ENCODE measurements at regions of chr3 and their contacts with region 1.

Region 1: GRCh38 chr3:40309418-40309924 is at the start of gene EIF1B:
- DNase-seq: peak; percentile 97 to 99 (median 98)
- ATAC-seq: peak; percentile 85
- H3K4me3 ChIP-seq: peak within 1 kb of the TSS; percentile 95 to 96
- H3K4me3 Mint-ChIP-seq: peak within 1 kb of the TSS; percentile 98
- H3K27ac ChIP-seq: peak within 1 kb of the TSS; percentile 93 to 96
- H3K27ac Mint-ChIP-seq: peak within 1 kb of the TSS; percentile 99
- H3K4me1 ChIP-seq: peaks cover 18% of the 10 kb centered on the region
- H3K4me1 Mint-ChIP-seq: peaks cover 33% of the 10 kb centered on the region
- H3K27me3 ChIP-seq: no peaks in the 10 kb centered on the region
- H3K27me3 Mint-ChIP-seq: no peaks in the 10 kb centered on the region
- CTCF ChIP-seq: peak; percentile 67
- total RNA-seq, gene EIF1B: 133 to 135 TPM

Region 2: GRCh38 chr3:39051647-39052561 is 1257.6 kb before region 1 on chr3 and contains the starts of genes SCN11A and WDR48:
- CTCF ChIA-PET with region 1: interaction called, 4 read pairs
- POLR2A ChIA-PET with region 1: no interaction called
- intact Hi-C with region 1: loop called (anchors 5 kb)
- DNase-seq: peak; percentile 82 to 97 (median 94)
- ATAC-seq: peak; percentile 88
- H3K4me3 ChIP-seq: peak within 1 kb of the TSS; percentile 59 to 70
- H3K4me3 Mint-ChIP-seq: peak within 1 kb of the TSS; percentile 98
- H3K27ac ChIP-seq: peak within 1 kb of the TSS; percentile 83 to 91
- H3K27ac Mint-ChIP-seq: peak within 1 kb of the TSS; percentile 98
- H3K4me1 ChIP-seq: peaks cover 16% of the 10 kb centered on the region
- H3K4me1 Mint-ChIP-seq: peaks cover 67% of the 10 kb centered on the region
- H3K27me3 ChIP-seq: no peaks in the 10 kb centered on the region
- H3K27me3 Mint-ChIP-seq: no peaks in the 10 kb centered on the region
- CTCF ChIP-seq: no peak
- total RNA-seq, gene SCN11A: 0.08 to 0.11 TPM
- total RNA-seq, gene WDR48: 102 to 103 TPM

Region 3: DNA sequence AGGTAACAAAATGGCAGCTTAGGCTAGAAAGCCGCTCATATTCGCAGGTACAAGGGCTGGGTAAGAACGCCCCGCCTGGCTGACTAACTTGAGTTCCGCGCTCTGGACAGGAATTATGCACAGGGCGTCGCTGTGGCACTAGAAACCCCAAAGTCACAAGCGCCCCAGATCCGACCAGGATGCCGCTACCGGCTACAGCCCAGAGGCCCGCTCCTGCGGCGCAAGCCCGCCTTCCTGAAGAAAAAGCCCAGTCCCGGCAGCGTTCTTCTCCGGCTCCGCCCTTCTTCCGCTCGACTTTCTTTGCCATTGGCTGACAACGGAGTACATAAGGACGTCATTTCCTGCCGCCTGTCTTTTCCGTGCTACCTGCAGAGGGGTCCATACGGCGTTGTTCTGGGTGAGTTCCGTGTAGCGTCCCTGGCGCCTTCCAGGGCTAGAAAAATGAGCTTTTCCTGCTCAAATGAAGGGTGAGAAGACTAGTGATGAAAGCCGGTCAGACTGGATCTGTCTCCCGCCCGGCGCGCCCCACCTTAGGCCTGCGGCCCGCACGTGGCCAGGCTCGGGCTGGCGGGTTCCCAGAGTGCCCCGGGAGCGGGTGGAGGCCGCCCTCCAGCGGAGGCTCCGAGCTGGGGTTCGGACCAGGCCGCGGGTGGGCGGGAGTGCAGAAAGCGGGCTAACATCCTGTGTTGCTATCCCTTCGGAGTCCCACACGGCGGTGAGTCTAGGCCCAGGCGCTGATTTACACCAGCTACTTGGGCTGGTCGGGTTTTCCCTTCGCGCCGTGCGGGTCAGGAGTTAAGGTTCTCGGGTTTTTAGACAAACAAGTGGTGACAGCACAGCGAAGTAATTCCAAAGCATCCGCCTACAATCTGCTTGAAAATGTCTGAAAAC is 902.9 kb before region 1 on chr3 and contains the start of gene RPSA:
- CTCF ChIA-PET with region 1: no interaction called
- POLR2A ChIA-PET with region 1: no interaction called
- intact Hi-C with region 1: loop called (anchors 1 to 2 kb)
- DNase-seq: peak; percentile 88 to 99 (median 94)
- ATAC-seq: peak; percentile 90
- H3K4me3 ChIP-seq: peak within 1 kb of the TSS; percentile 67 to 75
- H3K4me3 Mint-ChIP-seq: peak within 1 kb of the TSS; percentile 89
- H3K27ac ChIP-seq: peak within 1 kb of the TSS; percentile 83 to 90
- H3K27ac Mint-ChIP-seq: peak within 1 kb of the TSS; percentile 96
- H3K4me1 ChIP-seq: peaks cover 40% of the 10 kb centered on the region
- H3K4me1 Mint-ChIP-seq: peaks cover 48% of the 10 kb centered on the region
- H3K27me3 ChIP-seq: no peaks in the 10 kb centered on the region
- H3K27me3 Mint-ChIP-seq: no peaks in the 10 kb centered on the region
- CTCF ChIP-seq: peak; percentile 45
- total RNA-seq, gene RPSA: 1,951 to 2,020 TPM

Region 4: DNA sequence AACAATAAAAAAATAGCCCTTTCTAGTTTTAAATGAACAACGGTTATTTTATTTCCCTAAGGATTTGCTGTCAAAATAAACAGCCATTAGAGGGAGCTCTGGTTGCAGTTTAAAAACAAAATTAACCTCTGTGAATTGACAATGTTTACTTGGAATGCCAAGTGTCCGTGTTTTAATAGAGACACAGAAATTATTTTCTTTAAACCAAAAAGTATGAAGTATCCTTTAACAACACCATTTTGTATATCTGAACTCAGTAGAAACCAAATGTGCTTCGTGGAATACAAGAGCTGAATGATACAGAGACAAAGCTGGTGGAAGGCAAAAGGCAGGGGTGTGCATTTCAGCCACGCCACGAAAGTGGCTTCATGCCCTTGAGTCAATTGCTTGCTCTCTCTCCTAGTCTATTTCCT is 767.5 kb before region 1 on chr3:
- CTCF ChIA-PET with region 1: no interaction called
- POLR2A ChIA-PET with region 1: no interaction called
- intact Hi-C with region 1: no loop called
- DNase-seq: no peak
- ATAC-seq: no peak
- H3K4me3 ChIP-seq: no peak overlapping the region
- H3K4me3 Mint-ChIP-seq: no peak overlapping the region
- H3K27ac ChIP-seq: no peak overlapping the region
- H3K27ac Mint-ChIP-seq: no peak overlapping the region
- H3K4me1 ChIP-seq: no peaks in the 10 kb centered on the region
- H3K4me1 Mint-ChIP-seq: no peaks in the 10 kb centered on the region
- H3K27me3 ChIP-seq: no peaks in the 10 kb centered on the region
- H3K27me3 Mint-ChIP-seq: peaks cover 7% of the 10 kb centered on the region
- CTCF ChIP-seq: no peak

Region 5: GRCh38 chr3:40524568-40525285 is 215.3 kb after region 1 on chr3 and contains the start of gene ZNF621:
- CTCF ChIA-PET with region 1: no interaction called
- POLR2A ChIA-PET with region 1: interaction called, 4 read pairs
- intact Hi-C with region 1: loop called (anchors 1 kb)
- DNase-seq: peak; percentile 69 to 90 (median 84)
- ATAC-seq: peak; percentile 97
- H3K4me3 ChIP-seq: peak within 1 kb of the TSS; percentile 76 to 97
- H3K4me3 Mint-ChIP-seq: peak within 1 kb of the TSS; percentile 94
- H3K27ac ChIP-seq: peak within 1 kb of the TSS; percentile 80 to 94
- H3K27ac Mint-ChIP-seq: peak within 1 kb of the TSS; percentile 97
- H3K4me1 ChIP-seq: peaks cover 12% of the 10 kb centered on the region
- H3K4me1 Mint-ChIP-seq: peaks cover 38% of the 10 kb centered on the region
- H3K27me3 ChIP-seq: no peaks in the 10 kb centered on the region
- H3K27me3 Mint-ChIP-seq: no peaks in the 10 kb centered on the region
- CTCF ChIP-seq: no peak
- total RNA-seq, gene ZNF621: 7.1 to 9.7 TPM

Region 6: DNA sequence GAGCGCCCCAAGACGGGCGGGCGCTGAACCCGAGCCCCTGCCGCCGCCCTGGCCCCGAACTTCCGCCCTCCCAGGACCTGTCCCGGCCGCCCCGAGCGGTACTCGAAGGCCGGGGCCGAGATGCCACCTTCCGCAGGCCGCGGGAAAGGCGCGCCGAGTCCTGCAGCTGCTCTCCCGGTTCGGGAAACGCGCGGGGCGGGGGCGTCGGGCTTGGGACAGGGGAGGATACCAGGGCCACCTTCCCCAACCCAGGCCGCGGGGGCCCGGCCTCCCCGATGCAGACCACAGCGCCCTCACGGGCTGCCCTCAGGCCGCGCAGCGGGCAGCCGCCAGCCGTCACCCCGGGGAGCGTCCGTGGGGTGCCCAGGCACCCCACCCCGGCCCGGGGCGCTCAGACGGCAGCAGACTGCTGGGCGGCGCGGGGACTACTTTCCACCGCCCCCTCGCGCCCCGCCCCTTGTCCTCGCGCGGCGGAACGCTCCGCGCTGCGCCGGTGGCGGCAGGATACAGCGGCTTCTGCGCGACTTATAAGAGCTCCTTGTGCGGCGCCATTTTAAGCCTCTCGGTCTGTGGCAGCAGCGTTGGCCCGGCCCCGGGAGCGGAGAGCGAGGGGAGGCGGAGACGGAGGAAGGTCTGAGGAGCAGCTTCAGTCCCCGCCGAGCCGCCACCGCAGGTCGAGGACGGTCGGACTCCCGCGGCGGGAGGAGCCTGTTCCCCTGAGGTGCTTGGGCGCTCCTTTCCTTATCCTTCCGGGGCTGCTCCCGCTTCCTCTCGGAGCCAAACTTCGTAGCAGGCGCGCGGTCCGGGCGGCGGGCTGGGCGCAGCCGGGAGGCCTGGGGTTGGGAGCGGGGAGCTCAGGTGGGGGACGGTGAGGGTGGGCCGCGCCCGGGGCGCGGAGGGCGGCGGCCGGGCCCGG is 889.7 kb after region 1 on chr3 and contains the start of gene CTNNB1:
- CTCF ChIA-PET with region 1: no interaction called
- POLR2A ChIA-PET with region 1: no interaction called
- intact Hi-C with region 1: loop called (anchors 1 to 5 kb)
- DNase-seq: peak; percentile 87 to 96 (median 90)
- ATAC-seq: peak; percentile 81
- H3K4me3 ChIP-seq: peak within 1 kb of the TSS; percentile 95 to 98
- H3K4me3 Mint-ChIP-seq: peak within 1 kb of the TSS; percentile 96
- H3K27ac ChIP-seq: peak within 1 kb of the TSS; percentile 88 to 95
- H3K27ac Mint-ChIP-seq: peak within 1 kb of the TSS; percentile 97
- H3K4me1 ChIP-seq: peaks cover 40% of the 10 kb centered on the region
- H3K4me1 Mint-ChIP-seq: peaks cover 37% of the 10 kb centered on the region
- H3K27me3 ChIP-seq: no peaks in the 10 kb centered on the region
- H3K27me3 Mint-ChIP-seq: no peaks in the 10 kb centered on the region
- CTCF ChIP-seq: no peak
- total RNA-seq, gene CTNNB1: 206 to 225 TPM

Region 7: GRCh38 chr3:42012935-42013690 is 1703.6 kb after region 1 on chr3:
- CTCF ChIA-PET with region 1: no interaction called
- POLR2A ChIA-PET with region 1: no interaction called
- intact Hi-C with region 1: loop called (anchors 1 to 5 kb)
- DNase-seq: peak; percentile 56 to 89 (median 71)
- ATAC-seq: peak; percentile 73
- H3K4me3 ChIP-seq: peak overlapping the region; percentile 85 to 89
- H3K4me3 Mint-ChIP-seq: peak overlapping the region; percentile 91
- H3K27ac ChIP-seq: peak overlapping the region; percentile 72 to 98
- H3K27ac Mint-ChIP-seq: peak overlapping the region; percentile 98
- H3K4me1 ChIP-seq: peaks cover 20% of the 10 kb centered on the region
- H3K4me1 Mint-ChIP-seq: peaks cover 35% of the 10 kb centered on the region
- H3K27me3 ChIP-seq: no peaks in the 10 kb centered on the region
- H3K27me3 Mint-ChIP-seq: no peaks in the 10 kb centered on the region
- CTCF ChIP-seq: no peak

Measured in CD8-positive, alpha-beta T cell (primary cell).